ENCODE measurements at regions of chr2 and their contacts with region 1.

Region 1: DNA sequence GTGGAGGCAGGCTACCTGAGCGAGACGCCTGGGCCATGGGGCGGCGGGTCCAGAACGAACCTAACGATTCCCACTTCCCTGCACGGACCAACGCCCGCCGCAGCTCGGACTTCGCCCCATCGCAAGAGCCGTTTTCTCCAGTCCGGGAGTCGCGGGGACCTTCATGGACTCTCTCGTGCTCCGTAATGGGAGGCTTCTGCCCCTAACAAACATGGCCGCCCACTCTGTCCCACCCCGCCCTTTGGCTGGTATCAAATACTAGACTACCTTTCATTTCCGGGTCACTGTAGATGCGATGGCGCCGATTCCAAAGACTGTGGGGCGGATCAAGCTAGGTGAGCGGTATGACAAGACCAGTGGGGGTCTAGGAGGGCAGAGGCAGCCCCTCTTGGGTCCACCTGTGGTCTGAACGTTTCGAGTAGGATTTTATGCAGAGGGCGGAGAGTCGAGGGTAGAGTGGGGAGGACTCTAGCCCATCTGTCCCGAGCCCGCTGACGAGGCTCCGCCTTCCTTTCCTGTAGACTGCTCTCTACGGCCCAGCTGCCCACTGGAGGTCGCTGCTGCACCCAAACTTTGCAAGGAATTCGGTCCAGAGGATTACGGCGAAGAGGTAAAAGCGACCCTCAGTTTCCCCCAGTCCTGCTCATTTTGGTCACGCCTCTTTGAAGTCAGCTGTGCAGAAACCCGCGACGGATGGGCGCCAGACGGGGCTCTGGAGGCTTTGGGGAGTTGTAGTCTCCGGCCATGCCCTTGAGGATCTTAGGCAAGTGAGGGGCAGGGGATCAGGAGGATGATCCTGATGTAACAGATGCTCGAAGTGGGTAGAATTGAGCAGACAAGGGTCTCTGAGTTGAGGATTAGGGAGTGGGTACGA is at the starts of genes CCDC142 and TTC31:
- DNase-seq: peak; percentile 97
- H3K4me3 Mint-ChIP-seq: peak within 1 kb of the TSS; percentile 85
- H3K27ac Mint-ChIP-seq: peak within 1 kb of the TSS; percentile 89
- H3K4me1 Mint-ChIP-seq: peaks cover 20% of the 10 kb centered on the region
- H3K27me3 Mint-ChIP-seq: no peaks in the 10 kb centered on the region
- CTCF ChIP-seq: peak; percentile 81
- total RNA-seq, gene CCDC142: 10.1 and 16.4 TPM in 2 replicates
- total RNA-seq, gene TTC31: 17.6 and 18.1 TPM in 2 replicates

Region 2: DNA sequence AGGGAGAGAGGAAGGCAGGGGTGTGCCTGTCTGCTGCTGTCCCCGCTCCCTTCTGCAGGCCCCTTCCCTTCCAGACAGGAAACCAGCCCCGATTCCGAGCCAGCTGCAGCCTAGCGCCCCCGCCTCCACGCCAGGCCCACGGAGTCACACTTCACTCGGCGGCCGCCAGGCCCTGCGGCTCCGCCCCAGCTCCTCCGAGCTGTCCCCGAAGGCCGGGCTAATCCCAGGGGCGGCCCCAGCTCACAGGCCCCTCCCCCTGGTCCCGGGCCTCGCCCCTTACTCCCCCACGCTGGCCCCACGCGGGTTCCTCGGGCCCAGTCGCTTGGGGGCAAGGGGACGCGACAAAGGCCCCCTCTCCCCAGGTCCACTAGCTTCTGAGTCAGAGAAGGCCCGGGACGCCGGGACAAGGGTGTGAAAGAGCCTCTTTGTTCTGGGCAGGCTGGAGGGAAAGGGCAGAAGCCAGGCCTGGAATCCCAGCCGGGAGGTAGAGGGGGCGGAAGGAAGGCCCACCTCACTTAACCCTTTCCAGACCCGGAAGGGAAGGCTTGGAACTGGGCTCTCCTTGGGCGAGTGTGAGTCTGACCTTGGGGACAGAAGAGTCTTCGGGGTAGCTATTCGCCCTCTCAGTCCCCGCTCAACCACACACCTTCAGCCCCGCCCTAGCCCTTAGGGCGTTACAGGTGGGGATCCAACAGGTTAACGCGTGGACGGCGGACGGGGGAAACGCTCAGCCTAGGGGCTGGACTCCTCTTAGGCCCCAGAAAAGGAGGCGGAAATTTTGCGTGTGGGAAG is 42.5 kb before region 1 on chr2:
- CTCF ChIA-PET with region 1: interaction called, 5 read pairs
- POLR2A ChIA-PET with region 1: interaction called, 19 read pairs
- intact Hi-C with region 1: no loop called
- DNase-seq: peak; percentile 82
- H3K4me3 Mint-ChIP-seq: peak overlapping the region; percentile 78
- H3K27ac Mint-ChIP-seq: peak overlapping the region; percentile 80
- H3K4me1 Mint-ChIP-seq: peaks cover 15% of the 10 kb centered on the region
- H3K27me3 Mint-ChIP-seq: no peaks in the 10 kb centered on the region
- CTCF ChIP-seq: no peak

Region 3: GRCh38 chr2:74472086-74472944 is 10.7 kb before region 1 on chr2 and contains the start of gene MRPL53:
- CTCF ChIA-PET with region 1: interaction called, 18 read pairs
- POLR2A ChIA-PET with region 1: interaction called, 54 read pairs
- intact Hi-C with region 1: no loop called
- DNase-seq: peak; percentile 91
- H3K4me3 Mint-ChIP-seq: peak within 1 kb of the TSS; percentile 94
- H3K27ac Mint-ChIP-seq: peak within 1 kb of the TSS; percentile 97
- H3K4me1 Mint-ChIP-seq: peaks cover 8% of the 10 kb centered on the region
- H3K27me3 Mint-ChIP-seq: no peaks in the 10 kb centered on the region
- CTCF ChIP-seq: no peak
- total RNA-seq, gene MRPL53: 115 and 123 TPM in 2 replicates

Region 4: DNA sequence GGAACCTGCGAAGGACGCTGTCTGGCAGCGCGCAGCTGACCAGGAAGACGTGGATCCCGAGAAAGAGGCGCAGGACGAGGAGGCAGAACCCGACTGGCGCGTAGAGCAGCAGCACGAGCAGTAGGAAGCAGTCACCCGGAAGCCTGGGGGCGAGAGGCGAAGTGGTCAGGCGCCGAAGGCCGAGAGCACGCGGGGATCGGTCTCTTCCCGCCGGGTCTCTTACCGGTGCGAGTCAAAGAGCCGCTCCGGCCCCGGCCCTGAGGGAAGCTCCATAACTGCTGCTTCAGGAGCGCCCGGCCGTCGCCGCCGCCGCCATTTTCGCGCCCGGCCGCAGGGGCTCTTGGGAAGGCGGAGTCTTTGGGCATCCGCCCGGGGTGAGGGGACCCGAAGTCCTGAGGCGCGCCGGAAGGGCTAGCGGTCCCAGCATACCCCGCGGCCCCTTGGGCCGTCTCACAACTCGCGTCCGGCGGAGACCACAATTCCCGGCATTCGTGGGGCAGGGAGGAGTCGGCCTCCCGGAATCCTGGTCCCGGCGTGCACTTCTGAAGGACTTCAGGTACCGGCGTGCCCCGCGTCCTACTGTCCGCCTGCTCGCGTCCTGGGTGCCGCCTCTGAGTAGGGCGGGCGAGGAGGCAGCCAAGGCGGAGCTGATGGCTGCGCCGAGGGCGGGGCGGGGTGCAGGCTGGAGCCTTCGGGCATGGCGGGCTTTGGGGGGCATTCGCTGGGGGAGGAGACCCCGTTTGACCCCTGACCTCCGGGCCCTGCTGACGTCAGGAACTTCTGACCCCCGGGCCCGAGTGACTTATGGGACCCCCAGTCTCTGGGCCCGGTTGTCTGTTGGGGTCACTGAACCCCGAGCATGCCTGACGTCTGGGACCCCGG is 46.6 kb after region 1 on chr2 and contains the starts of genes AUP1 and HTRA2:
- CTCF ChIA-PET with region 1: interaction called, 80 read pairs
- POLR2A ChIA-PET with region 1: interaction called, 65 read pairs
- intact Hi-C with region 1: loop called (anchors 1 kb)
- DNase-seq: peak; percentile 99
- H3K4me3 Mint-ChIP-seq: peak within 1 kb of the TSS; percentile 94
- H3K27ac Mint-ChIP-seq: peak within 1 kb of the TSS; percentile 91
- H3K4me1 Mint-ChIP-seq: peaks cover 38% of the 10 kb centered on the region
- H3K27me3 Mint-ChIP-seq: no peaks in the 10 kb centered on the region
- CTCF ChIP-seq: no peak
- total RNA-seq, gene AUP1: 138 and 140 TPM in 2 replicates
- total RNA-seq, gene HTRA2: 27.6 and 33.0 TPM in 2 replicates

Region 5: GRCh38 chr2:74573747-74574562 is 90.9 kb after region 1 on chr2:
- CTCF ChIA-PET with region 1: interaction called, 25 read pairs
- POLR2A ChIA-PET with region 1: interaction called, 11 read pairs
- intact Hi-C with region 1: no loop called
- DNase-seq: peak; percentile 71
- H3K4me3 Mint-ChIP-seq: peak overlapping the region; percentile 48
- H3K27ac Mint-ChIP-seq: peak overlapping the region; percentile 71
- H3K4me1 Mint-ChIP-seq: peaks cover 18% of the 10 kb centered on the region
- H3K27me3 Mint-ChIP-seq: no peaks in the 10 kb centered on the region
- CTCF ChIP-seq: no peak

Region 6: DNA sequence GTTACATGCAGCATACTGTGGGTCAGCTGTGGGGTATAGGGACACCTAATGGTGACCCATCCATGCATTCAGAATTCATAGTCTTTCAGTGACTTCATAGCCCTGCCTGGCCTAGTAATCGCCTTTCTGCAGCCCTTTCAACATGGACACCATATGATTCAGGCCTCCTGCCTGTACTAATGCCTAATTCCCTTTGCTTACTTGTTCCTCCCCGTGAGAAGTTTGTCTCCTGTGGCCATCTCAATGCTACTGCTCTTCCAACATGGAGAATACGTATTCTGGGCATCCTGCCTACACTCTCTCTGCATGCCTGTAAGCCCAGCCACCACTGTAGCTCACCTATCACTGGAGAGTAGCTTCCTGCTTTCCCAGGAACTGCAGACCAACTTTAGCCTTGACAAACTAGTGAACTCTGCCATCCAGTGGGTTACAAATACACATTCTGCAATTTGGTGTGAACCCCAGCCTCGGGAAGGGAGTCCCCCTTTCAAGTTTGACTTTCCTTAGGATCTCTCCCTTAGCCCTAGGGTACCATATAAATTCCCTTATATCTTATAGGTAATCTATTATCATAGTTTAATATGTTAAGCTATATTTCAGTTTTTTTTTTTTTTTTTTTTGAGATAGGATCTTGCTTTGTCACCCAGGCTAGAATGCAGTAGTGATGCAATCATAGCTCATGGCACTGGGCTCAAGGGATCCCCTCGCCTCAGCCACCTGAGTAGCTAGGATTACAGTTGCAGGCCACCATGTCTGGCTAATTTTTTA is 142.8 kb after region 1 on chr2:
- CTCF ChIA-PET with region 1: no interaction called
- POLR2A ChIA-PET with region 1: no interaction called
- intact Hi-C with region 1: no loop called
- DNase-seq: no peak
- H3K4me3 Mint-ChIP-seq: no peak overlapping the region
- H3K27ac Mint-ChIP-seq: no peak overlapping the region
- H3K4me1 Mint-ChIP-seq: no peaks in the 10 kb centered on the region
- H3K27me3 Mint-ChIP-seq: no peaks in the 10 kb centered on the region
- CTCF ChIP-seq: no peak